SK-N-SH (cell line): ENCODE measurements at regions of chr19 and their contacts with region 1.

Region 1: DNA sequence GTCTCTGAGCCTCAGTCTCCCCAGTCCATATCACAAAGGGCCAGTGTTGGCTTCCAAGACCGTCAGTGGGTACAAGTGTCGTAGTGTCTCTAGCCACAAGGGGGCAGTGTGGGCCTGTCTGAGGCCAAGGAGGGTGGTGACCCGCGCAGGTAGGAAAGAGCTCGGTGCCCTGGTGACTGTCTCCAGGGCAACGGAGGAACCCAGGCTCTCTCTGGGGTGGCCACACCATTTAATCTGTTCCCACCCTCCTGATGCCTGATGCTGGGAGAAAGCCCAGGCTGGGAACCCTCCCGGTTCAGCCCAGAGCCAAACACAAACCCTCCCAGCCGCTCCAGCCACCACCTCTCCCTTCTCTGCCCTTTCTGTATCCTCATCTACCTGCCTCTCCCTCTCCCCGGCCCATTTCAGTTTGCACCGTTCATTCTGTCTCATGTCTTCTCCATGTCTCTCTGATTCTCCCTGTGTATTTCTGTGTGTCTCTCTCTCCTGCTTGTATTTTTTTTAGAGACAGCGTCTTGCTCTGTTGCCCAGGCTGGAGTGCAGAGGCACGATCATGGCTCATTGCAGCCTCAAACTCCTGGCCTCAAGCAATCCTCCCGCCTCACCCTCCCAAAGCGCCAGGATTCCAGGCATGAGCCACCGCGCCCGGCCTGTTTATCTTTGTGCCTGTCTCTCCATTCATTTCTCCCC is 17.5 kb upstream of the MEIS3 start:
- DNase-seq: peak; percentile 86
- H3K4me3 ChIP-seq: no peak overlapping the region; a peak in 1 of 4 replicates
- H3K27ac ChIP-seq: no peak overlapping the region
- H3K4me1 ChIP-seq: no peaks in the 10 kb centered on the region; a peak in 1 of 4 replicates
- H3K27me3 ChIP-seq: no peaks in the 10 kb centered on the region
- CTCF ChIP-seq: peak; percentile 86
- EP300 ChIP-seq: no peak
- RAD21 ChIP-seq: peak; percentile 98

Region 2: DNA sequence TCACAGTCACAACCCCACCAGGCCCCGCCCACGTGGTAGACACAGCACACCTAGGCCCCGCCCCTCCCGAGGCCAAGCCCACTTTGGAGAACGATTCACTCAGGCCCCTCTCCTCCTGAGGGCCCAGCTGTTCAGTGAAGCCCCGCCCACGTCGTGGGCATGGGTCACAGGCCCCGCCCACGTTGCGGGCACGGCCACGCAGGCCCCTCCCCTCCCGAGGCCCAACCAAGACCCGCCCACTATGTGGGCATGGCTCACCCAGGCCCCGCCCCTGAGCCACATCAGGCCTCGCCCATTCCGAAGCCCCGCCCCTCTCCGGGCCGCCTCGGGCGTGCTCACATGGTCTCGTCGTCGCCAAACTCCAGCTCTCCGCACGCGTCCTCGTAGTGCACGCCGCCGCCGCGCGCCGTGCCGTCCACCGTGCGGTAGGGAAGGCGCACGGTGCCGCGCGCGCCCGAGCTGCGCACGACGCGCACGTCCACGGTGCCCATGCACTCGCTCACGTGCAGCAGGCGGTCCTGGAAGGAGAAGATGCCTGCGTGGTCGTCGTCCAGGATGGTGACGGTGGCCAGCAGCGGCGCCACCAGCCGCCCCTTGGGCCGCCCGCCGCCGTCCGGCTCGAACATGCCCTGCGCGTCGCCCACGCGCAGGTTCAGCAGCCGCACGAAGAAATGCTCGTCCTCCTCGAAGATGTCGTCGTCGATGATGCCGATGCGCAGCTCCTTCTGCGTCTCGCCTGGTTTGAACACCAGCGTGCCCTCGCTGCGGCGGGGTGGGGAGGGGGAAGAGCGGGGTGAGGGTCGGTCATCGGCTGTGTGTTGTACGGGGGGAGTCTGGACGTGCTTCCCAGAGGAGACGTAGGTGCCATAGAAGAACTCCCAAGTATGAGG is 10.9 kb after region 1 on chr19:
- CTCF ChIA-PET with region 1: interaction called, 80 read pairs
- POLR2A ChIA-PET with region 1: interaction called, 5 read pairs
- DNase-seq: peak; percentile 97
- H3K4me3 ChIP-seq: peak overlapping the region; percentile 41 to 46; a peak in 3 of 4 replicates
- H3K27ac ChIP-seq: peak overlapping the region in 1 of 2 experiments; percentile 67; a peak in 1 of 4 replicates
- H3K4me1 ChIP-seq: peaks cover 0 to 9% of the 10 kb centered on the region in 2 experiments; a peak in 2 of 4 replicates
- H3K27me3 ChIP-seq: no peaks in the 10 kb centered on the region; the same call in 1 of the 2 replicates
- CTCF ChIP-seq: no peak
- EP300 ChIP-seq: no peak
- RAD21 ChIP-seq: no peak

Region 3: DNA sequence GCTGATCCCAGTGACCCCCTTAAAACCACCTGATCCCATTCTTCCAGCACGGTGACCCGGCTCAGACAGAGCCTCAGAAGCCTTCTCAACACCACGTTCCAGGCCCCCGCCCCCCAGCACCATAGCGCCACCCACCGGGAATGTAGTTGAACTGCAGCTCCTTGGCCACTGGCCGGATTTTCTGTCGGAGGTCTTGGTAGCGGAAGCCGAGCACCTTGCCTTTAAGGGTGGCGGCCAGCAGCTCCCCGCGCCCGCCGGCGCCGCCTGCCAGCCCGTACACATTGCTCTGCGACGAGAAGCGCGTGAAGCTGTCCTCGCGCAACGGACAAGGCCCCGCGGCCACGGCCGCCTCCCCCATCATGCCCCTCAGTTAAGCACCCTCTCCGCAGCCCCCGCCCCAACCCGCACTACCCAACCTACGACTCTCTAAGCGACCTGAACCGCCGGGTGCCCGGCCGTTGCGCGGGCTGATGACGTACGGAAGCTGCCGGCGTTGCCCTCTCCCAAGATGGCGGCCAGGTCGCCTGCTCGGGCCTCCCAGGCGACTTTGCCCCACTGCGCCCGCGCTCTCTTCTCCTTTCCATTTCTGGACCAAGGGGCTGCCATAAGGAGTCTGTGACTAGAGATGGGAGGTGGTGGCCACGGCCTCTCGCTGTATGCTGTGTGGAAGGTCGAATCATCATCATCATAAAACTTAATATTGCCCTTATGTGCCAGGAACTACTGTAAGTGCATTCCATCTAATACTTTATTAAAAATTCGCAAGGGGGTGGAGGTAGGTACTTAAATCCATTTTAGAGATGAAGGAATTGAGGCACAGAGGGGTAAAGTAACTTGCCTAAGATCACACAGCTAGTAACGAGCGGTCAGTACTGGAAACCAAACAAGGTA is 47.2 kb after region 1 on chr19 and contains the start of gene KPTN:
- CTCF ChIA-PET with region 1: interaction called, 50 read pairs
- POLR2A ChIA-PET with region 1: interaction called, 5 read pairs
- DNase-seq: peak; percentile 98
- H3K4me3 ChIP-seq: peak within 1 kb of the TSS; percentile 61 to 76
- H3K27ac ChIP-seq: peak within 1 kb of the TSS; percentile 81 to 89
- H3K4me1 ChIP-seq: peaks cover 0 to 12% of the 10 kb centered on the region in 2 experiments; a peak in 1 of 4 replicates
- H3K27me3 ChIP-seq: no peaks in the 10 kb centered on the region
- CTCF ChIP-seq: peak; percentile 98
- EP300 ChIP-seq: no peak
- RAD21 ChIP-seq: peak; percentile 69
- polyA plus RNA-seq, gene KPTN: 15.8 and 17.7 TPM in 2 replicates

Region 4: DNA sequence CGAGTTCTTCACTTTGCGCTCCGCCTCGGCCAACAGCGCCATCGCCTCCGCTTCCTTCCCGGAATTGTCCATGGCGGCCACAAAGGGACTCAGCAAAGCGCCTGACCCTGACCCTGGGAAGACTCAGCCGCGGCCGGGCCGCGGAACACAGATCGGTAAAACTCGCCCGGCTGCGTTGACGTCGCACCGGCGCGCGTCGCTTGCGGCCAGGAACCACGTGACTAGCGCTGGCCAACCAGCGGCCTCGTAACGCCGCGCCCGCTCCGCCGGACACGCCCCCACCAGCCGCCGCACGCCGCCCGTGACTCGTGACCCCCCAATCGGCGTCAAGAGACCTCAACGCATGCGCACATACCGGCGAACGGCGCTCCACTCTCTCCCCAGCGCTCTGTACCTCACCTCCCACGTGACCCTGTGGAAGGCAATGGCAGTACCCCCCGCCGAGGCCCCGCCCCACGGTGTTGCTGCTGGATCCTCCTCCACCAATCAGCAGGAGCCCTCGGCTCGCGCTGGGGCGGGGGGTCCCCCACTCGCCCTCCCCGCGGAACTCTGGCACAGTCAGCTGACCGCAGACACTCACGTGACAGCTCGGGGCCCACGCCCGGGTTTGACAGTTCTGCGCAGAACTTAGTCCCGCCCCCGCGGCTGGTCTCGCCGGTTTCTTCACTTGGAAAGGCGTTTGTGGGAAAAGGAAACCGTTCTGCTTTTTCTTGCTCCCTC is 78.2 kb after region 1 on chr19 and contains the start of gene NAPA:
- CTCF ChIA-PET with region 1: interaction called, 168 read pairs
- POLR2A ChIA-PET with region 1: interaction called, 3 read pairs
- DNase-seq: peak; percentile 99
- H3K4me3 ChIP-seq: peak within 1 kb of the TSS; percentile 91 to 97
- H3K27ac ChIP-seq: peak within 1 kb of the TSS; percentile 81 to 88
- H3K4me1 ChIP-seq: peaks cover 15 to 16% of the 10 kb centered on the region in 2 experiments; a peak in 3 of 4 replicates
- H3K27me3 ChIP-seq: no peaks in the 10 kb centered on the region
- CTCF ChIP-seq: no peak
- EP300 ChIP-seq: peak in 1 of 2 experiments; percentile 60; a peak in 1 of 4 replicates
- RAD21 ChIP-seq: peak; percentile 81
- polyA plus RNA-seq, gene NAPA: 80.0 and 84.1 TPM in 2 replicates

Region 5: GRCh38 chr19:47697863-47698609 is 261.2 kb after region 1 on chr19:
- CTCF ChIA-PET with region 1: interaction called, 44 read pairs
- POLR2A ChIA-PET with region 1: no interaction called
- DNase-seq: peak; percentile 92
- H3K4me3 ChIP-seq: no peak overlapping the region
- H3K27ac ChIP-seq: peak overlapping the region in 1 of 2 experiments; percentile 39; a peak in 2 of 4 replicates
- H3K4me1 ChIP-seq: no peaks in the 10 kb centered on the region; a peak in 1 of 4 replicates
- H3K27me3 ChIP-seq: no peaks in the 10 kb centered on the region
- CTCF ChIP-seq: peak; percentile 93
- EP300 ChIP-seq: no peak
- RAD21 ChIP-seq: peak; percentile 98

Region 6: GRCh38 chr19:47719047-47719859 is 282.4 kb after region 1 on chr19:
- CTCF ChIA-PET with region 1: interaction called, 13 read pairs
- POLR2A ChIA-PET with region 1: no interaction called
- DNase-seq: peak; percentile 95
- H3K4me3 ChIP-seq: peak overlapping the region in 1 of 2 experiments; percentile 40; a peak in 2 of 4 replicates
- H3K27ac ChIP-seq: peak overlapping the region; percentile 94 to 95
- H3K4me1 ChIP-seq: peaks cover 19 to 21% of the 10 kb centered on the region in 2 experiments; a peak in 3 of 4 replicates
- H3K27me3 ChIP-seq: no peaks in the 10 kb centered on the region
- CTCF ChIP-seq: no peak
- EP300 ChIP-seq: peak; percentile 57 to 79; a peak in 2 of 4 replicates
- RAD21 ChIP-seq: no peak